Right lobe of liver (tissue), 6 donors: ENCODE measurements at regions of chr5 and their contacts with region 1.

Region 1: DNA sequence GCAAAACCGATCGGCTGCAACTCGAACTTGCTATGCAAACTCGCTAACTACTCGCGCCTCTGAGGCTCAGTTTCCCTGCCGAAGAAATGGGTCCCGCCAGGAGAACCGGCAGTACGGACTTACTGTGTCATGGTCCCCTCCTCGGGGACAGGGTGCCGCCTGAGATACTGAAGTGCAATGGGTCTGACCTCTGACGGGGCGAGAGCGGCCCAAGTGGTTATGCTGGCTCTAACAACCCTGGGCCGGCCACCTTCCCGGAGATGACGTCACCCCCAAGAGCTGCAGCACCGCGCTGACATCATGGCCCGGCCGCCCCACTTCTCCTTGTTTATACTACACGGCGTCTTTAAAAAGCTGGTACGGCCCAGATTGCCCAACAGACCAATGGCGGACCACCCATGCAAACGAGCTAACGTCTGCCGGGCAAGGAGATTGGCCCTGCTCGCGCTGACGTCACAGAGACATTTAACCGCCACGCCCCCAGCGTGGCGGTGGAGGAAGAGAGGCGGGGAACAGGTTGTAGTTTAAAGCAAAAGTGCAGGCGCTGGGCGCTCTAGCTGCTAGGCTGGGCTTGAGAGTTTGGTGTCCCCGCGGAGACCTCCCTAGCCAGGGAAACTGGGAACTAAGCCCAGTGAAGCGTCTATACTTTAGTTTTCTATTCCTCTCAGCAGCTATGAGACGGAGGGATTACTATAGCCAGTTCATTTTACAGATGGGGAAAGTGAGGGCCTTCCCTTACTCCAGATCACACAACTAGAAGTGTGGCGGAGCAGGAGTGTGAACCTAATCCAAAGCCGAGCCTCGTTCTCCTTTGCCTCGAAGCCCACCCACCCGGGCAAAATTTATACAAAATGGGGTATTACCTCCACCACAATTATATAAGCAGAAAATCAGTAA is 654 bp upstream of the RNF44 start:
- DNase-seq: peak; percentile 98 to 99 (median 99)
- ATAC-seq: peak; percentile 75 to 84 (median 80)
- H3K4me3 ChIP-seq: peak overlapping the region; percentile 83 to 93 (median 92)
- H3K27ac ChIP-seq: peak overlapping the region; percentile 97 to 98 (median 97)
- H3K4me1 ChIP-seq: peaks cover 0 to 36% (median 24%) of the 10 kb centered on the region in 4 donors
- H3K27me3 ChIP-seq: no peaks in the 10 kb centered on the region
- CTCF ChIP-seq: no peak
- POLR2A ChIP-seq: peak; percentile 51

Region 2: DNA sequence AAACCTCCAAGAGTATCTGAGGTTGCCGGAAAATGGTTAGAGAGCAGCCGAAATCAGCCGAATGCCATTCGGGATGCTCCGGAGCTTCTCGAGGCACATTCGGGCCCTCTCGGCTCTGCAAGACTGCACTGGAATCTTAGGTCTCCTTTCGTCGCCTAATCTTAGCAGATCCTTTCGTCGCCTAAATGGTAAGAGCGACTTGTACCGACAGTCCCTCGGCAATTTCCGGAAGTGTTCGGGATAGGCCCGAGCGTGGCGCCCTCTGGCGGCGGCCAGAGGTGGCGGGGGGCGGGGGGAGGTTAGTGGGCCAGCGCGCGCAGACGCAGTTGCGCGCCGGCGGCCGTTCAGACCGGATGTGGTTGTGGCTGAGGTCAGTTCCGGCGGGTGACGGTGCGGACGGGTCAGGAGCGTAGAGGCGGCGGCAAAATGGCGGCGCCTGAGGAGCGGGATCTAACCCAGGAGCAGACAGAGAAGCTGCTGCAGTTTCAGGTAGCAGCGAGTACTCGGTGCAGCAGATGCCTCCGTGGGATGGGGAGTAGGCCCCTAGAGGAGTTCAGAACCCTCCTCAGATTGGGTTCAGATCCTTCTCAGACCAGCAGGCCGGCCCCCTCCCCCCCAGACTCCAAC is 89.8 kb before region 1 on chr5 and contains the start of gene FAF2:
- intact Hi-C with region 1: loop called in 1 of 2 experiments (anchors 10 kb)
- DNase-seq: peak; percentile 96 to 97 (median 96)
- ATAC-seq: peak; percentile 96 to 98 (median 96)
- H3K4me3 ChIP-seq: peak within 1 kb of the TSS; percentile 62 to 81 (median 72)
- H3K27ac ChIP-seq: peak within 1 kb of the TSS; percentile 91 to 96 (median 91)
- H3K4me1 ChIP-seq: peaks cover 0 to 14% (median 9%) of the 10 kb centered on the region in 4 donors
- H3K27me3 ChIP-seq: no peaks in the 10 kb centered on the region
- CTCF ChIP-seq: peak; percentile 97 to 99 (median 98)
- POLR2A ChIP-seq: peak; percentile 83
- total RNA-seq, gene FAF2: 17.5 to 23.3 (median 19.8) TPM